Right ventricle myocardium superior (tissue), 1 donor: ENCODE measurements at regions of chr4 and their contacts with region 1.

Region 1: DNA sequence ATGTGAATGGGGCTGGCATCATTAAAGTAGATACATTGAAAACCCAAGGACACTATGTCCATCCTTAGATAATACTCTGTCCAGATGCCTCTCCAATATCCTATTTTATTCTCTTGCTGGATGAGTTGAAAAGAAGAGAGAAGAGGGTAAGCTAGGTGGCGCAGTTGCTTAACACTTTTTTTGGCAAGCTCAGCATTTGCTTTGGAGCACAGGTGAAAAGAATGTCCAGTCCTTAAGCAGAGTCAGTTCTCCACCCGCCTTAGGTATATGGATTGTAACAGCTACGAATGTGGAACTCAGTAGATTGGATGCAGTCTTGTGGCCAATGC is 208.4 kb downstream of the NWD2 start:
- DNase-seq: no peak
- ATAC-seq: peak; percentile 90

Region 2: GRCh38 chr4:37359261-37359660 is 93.7 kb before region 1 on chr4:
- intact Hi-C with region 1: no loop called
- DNase-seq: no peak
- ATAC-seq: no peak

Region 3: GRCh38 chr4:37561803-37562207 is 108.9 kb after region 1 on chr4:
- intact Hi-C with region 1: loop called (anchors 10 kb)
- DNase-seq: no peak
- ATAC-seq: no peak